Activated CD4-positive, alpha-beta T cell treated with anti-CD3 and anti-CD28 coated beads, Interleukin-2, amount 10 ng/mL, durations not matched to agents 7 days and 5 days (primary cell): ENCODE measurements at regions of chr2 and their contacts with region 1.

Region 1: GRCh38 chr2:170509452-170510193 is 205.5 kb upstream of the SP5 start:
- DNase-seq: no peak
- H3K4me3 Mint-ChIP-seq: no peak overlapping the region
- H3K27ac Mint-ChIP-seq: no peak overlapping the region
- H3K4me1 Mint-ChIP-seq: peaks cover 37% of the 10 kb centered on the region
- H3K27me3 Mint-ChIP-seq: peaks cover 23% of the 10 kb centered on the region

Region 2: GRCh38 chr2:170521299-170521698 is 11.7 kb after region 1 on chr2:
- CTCF ChIA-PET with region 1: interaction called, 13 read pairs
- POLR2A ChIA-PET with region 1: no interaction called
- DNase-seq: no peak
- H3K4me3 Mint-ChIP-seq: no peak overlapping the region
- H3K27ac Mint-ChIP-seq: no peak overlapping the region
- H3K4me1 Mint-ChIP-seq: peaks cover 8% of the 10 kb centered on the region
- H3K27me3 Mint-ChIP-seq: peaks cover 9% of the 10 kb centered on the region